ENCODE measurements at regions of chr7 and their contacts with region 1.

Region 1: DNA sequence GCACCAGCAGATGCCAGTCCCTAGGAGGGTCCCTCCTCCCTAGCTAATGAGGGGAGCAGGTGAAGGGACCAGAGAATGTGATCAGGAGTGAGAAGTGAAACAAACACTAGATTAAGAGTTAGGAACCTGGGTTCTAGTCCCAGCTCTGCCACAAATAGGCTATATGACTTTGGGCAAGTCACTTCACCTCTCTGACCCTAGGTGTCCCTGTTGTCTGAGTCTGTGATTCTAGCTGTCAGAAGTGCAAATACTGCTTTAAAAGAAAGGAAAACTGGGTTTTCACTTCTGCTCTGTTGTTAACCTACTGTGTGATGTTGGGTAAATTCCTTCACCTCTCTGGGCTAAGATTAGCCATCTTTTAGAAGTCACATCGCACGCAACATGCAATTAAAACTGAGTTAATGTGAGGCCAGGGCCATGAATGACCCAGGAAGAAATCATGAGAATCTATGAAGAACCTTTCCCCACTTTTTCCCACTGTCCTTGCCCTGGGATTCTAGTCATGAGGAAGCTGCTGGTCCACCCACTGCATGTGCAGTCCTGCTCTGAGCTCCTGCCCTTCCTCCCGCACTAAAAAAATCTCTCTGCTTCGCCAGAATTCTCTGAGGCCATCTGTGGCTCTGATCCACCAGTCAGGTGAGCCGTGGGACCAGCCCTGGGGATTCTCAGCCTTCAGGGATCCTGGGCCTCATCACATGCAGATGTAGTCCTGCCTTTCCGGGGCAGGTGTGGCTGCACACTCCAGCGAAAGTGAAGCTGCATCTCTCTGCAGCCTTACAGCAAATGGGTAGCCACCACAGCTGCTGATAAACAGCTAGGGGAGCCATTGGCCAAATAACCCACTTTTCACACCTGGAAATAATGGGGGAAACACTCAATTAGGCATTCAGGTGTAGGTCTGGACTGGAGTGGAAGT is 181.7 kb downstream of the PLXNA4 start:
- DNase-seq: no peak
- ATAC-seq: peak; percentile 54 to 74 (median 59)
- H3K4me3 ChIP-seq: no peak overlapping the region
- H3K27ac ChIP-seq: no peak overlapping the region
- H3K4me1 ChIP-seq: no peaks in the 10 kb centered on the region
- H3K27me3 ChIP-seq: no peaks in the 10 kb centered on the region
- CTCF ChIP-seq: peak; percentile 36 to 44 (median 41)
- POLR2A ChIP-seq: no peak

Region 2: DNA sequence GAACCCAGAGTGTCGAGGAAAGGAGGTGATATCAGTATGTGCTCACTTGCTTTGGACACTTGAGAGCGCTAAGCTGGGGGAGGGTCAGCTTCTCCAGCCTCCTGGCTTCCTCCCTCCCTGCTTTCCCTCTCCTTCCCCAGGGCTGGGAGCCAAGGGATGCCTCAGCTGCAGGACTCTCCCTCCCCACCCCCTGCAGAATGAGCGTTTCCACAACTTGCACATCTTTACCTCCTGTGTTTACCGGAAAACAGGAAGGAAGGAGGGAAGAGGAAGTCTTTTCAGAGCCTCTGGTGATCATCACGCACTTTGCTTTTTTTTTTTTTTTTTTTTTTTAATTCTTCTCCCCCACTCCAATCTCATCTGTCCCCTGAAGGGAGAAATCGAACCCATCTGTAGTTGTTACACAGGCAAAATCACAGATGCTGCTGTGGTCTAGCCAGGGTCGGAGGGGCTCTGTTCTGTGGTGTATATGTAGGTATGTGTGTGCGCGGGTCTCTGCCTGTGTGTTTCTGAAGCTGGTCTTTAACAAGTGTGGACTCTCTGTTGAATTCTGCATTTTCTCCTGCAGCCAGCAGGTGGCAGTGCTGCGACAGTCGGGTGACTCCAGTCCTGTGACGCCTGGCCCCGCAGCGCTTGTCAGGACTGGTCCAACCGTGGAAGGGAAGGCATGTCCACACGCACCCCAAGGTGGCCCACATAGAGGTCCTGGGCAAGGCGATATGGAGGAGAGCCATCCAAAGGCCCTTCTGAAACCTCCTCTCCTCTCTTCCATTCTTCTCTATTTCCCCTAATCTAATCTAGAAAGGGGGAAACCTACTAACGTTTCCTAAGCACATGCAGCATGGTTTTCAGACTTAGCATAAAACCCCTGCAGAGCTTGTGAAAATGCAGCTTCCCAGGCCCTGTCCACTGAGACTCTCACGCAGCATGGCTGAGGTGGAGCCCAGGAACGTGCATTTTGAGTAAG is 75.9 kb before region 1 on chr7:
- intact Hi-C with region 1: loop called in 1 of 2 experiments (anchors 10 kb)
- DNase-seq: peak; percentile 83 to 85 (median 83)
- ATAC-seq: peak; percentile 95 to 99 (median 97)
- H3K4me3 ChIP-seq: no peak overlapping the region
- H3K27ac ChIP-seq: no peak overlapping the region
- H3K4me1 ChIP-seq: peaks cover 0 to 6% (median 2%) of the 10 kb centered on the region in 4 donors
- H3K27me3 ChIP-seq: no peaks in the 10 kb centered on the region
- CTCF ChIP-seq: peak; percentile 84 to 92 (median 86)
- POLR2A ChIP-seq: no peak

Region 3: GRCh38 chr7:132489776-132490237 is 95.3 kb after region 1 on chr7:
- intact Hi-C with region 1: no loop called
- DNase-seq: no peak
- ATAC-seq: no peak
- H3K4me3 ChIP-seq: no peak overlapping the region
- H3K27ac ChIP-seq: no peak overlapping the region
- H3K4me1 ChIP-seq: no peaks in the 10 kb centered on the region
- H3K27me3 ChIP-seq: no peaks in the 10 kb centered on the region
- CTCF ChIP-seq: no peak
- POLR2A ChIP-seq: no peak